WTC11 (cell line): ENCODE measurements at regions of chr3 and their contacts with region 1.

Region 1: GRCh38 chr3:86563400-86563970 is 427.5 kb downstream of the VGLL3 start:
- DNase-seq: no peak
- ATAC-seq: no peak
- H3K4me3 Mint-ChIP-seq: no peak overlapping the region
- H3K27ac Mint-ChIP-seq: no peak overlapping the region
- H3K4me1 Mint-ChIP-seq: peaks cover 22% of the 10 kb centered on the region
- H3K27me3 Mint-ChIP-seq: no peaks in the 10 kb centered on the region
- CTCF ChIP-seq: peak; percentile 36; the same call in 1 of the 2 replicates

Region 2: GRCh38 chr3:86245360-86245759 is 318.1 kb before region 1 on chr3:
- CTCF ChIA-PET with region 1: interaction called, 11 read pairs
- POLR2A ChIA-PET with region 1: no interaction called
- DNase-seq: no peak
- ATAC-seq: peak; percentile 59
- H3K4me3 Mint-ChIP-seq: no peak overlapping the region
- H3K27ac Mint-ChIP-seq: no peak overlapping the region
- H3K4me1 Mint-ChIP-seq: peaks cover 5% of the 10 kb centered on the region
- H3K27me3 Mint-ChIP-seq: no peaks in the 10 kb centered on the region
- CTCF ChIP-seq: 0 out of 2 replicates have a peak, but pooled peaks have one; percentile 29

Region 3: DNA sequence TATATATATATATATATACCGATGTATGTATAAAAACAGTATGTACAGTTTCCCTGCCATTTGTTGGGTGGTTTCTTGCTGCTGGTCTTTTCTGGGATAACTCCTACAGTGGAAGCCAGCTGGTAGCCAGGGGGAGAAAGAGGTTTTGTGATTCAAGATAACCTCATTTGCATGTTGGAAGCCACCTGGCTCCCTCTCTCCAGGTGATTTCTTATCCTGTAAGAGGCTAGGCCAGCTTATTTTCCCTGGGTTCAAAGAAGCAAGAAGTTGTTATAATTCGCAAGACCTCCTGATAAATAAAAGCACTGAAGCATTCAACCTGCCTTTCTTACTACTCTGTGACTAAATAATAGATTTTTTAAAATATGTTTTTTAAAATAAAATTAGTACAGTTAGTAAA is 15.8 kb before region 1 on chr3:
- CTCF ChIA-PET with region 1: interaction called, 13 read pairs
- POLR2A ChIA-PET with region 1: no interaction called
- DNase-seq: peak; percentile 64
- ATAC-seq: peak; percentile 100
- H3K4me3 Mint-ChIP-seq: no peak overlapping the region
- H3K27ac Mint-ChIP-seq: no peak overlapping the region
- H3K4me1 Mint-ChIP-seq: peaks cover 55% of the 10 kb centered on the region
- H3K27me3 Mint-ChIP-seq: no peaks in the 10 kb centered on the region; the same call in 1 of the 2 replicates
- CTCF ChIP-seq: no peak